ENCODE measurements at regions of chr3 and their contacts with region 1.

Region 1: DNA sequence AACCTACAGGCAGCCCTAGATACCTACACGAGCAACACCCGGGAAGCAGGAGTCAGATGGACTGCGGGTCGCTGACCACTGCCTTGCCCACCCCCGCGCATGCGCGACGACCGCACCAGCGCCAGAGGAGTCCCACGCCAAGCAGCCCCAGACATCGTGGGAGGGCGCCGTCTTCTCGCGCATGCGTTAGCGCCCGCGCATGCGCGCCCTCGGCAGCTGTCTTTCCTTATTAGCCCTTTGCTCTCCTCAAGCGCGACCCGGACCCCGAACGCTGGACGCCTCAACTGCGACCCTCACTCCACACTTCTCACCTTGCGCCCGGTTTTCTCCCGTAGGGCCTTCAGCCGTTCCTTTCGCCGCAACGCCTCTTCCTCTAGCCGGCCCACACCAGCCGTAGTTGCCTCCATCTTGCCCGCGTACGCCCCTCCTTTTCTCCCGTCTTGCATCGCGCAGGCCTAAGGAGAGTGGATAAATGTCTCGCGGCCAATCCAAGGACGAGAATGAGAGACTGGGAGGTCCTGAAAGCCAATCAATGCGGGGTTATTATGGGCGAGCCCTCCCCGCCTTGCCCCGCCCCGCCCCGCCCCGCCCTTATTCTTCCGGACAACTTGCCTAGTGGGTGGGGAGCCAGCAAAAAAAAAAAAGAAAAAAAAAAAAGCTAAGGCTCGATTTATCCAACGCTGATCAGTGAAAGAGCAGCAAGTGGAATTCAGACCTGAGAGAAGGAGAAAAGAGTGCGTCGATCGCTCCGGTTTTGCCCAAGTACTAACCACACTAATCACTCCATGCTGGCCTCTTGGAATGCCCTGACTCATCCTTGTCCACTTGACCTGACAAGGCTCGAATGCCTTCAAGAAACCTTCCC is at the start of gene CCDC12:
- DNase-seq: peak; percentile 98
- ATAC-seq: peak; percentile 79
- H3K4me3 ChIP-seq: peak within 1 kb of the TSS; percentile 87
- H3K27ac ChIP-seq: peak within 1 kb of the TSS; percentile 87
- H3K4me1 ChIP-seq: peaks cover 29% of the 10 kb centered on the region
- H3K27me3 ChIP-seq: no peaks in the 10 kb centered on the region
- CTCF ChIP-seq: no peak
- total RNA-seq, gene CCDC12: 44.2 and 67.8 TPM in 2 replicates

Region 2: DNA sequence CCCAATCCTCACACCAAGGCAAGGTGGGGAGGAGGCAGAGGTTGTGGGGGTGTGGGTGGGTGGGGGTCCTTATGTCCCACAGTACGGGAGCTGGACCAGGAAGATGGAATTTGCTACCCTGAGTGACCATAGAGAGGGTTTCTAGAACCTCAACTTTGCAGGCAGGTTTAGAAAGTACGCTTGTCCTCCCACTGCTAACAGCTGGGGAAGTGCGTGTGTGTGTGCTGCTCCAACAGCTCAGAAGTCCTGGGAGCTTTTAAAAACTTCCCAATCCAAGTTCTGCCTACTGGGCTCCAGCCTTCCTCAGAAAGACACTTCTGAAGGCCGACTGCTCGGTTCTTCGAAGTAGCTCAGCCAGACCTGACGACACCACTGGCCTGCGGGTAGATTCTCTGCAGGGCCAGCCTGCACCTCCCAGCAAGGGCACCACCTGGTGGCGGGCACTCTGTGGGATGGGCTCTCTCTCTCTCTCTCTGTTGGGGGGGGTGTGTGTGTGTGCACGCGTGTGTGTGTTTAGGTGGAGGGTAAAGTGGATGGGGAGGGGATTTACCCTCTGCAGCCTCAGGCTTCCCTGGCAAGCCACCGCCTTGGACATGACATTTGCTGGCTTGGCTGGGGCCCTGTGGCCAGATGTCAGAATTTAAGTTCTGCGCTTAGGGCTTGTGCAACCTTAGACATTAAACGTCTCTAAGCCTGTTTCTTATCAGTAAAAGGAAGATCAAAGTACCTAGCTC is 1766.1 kb before region 1 on chr3:
- CTCF ChIA-PET with region 1: no interaction called
- POLR2A ChIA-PET with region 1: interaction called, 11 read pairs
- intact Hi-C with region 1: no loop called
- DNase-seq: peak; percentile 92
- ATAC-seq: peak; percentile 98
- H3K4me3 ChIP-seq: no peak overlapping the region
- H3K27ac ChIP-seq: no peak overlapping the region
- H3K4me1 ChIP-seq: peaks cover 13% of the 10 kb centered on the region
- H3K27me3 ChIP-seq: no peaks in the 10 kb centered on the region
- CTCF ChIP-seq: peak; percentile 92

Region 3: GRCh38 chr3:46935168-46935858 is 41.2 kb before region 1 on chr3:
- CTCF ChIA-PET with region 1: interaction called, 7 read pairs
- POLR2A ChIA-PET with region 1: interaction called, 33 read pairs
- intact Hi-C with region 1: loop called (anchors 2 kb)
- DNase-seq: peak; percentile 93
- ATAC-seq: peak; percentile 84
- H3K4me3 ChIP-seq: 0 out of 2 replicates have a peak overlapping the region, but pooled peaks have one; percentile 32
- H3K27ac ChIP-seq: peak overlapping the region; percentile 96
- H3K4me1 ChIP-seq: peaks cover 65% of the 10 kb centered on the region
- H3K27me3 ChIP-seq: no peaks in the 10 kb centered on the region
- CTCF ChIP-seq: peak; percentile 56

Region 4: DNA sequence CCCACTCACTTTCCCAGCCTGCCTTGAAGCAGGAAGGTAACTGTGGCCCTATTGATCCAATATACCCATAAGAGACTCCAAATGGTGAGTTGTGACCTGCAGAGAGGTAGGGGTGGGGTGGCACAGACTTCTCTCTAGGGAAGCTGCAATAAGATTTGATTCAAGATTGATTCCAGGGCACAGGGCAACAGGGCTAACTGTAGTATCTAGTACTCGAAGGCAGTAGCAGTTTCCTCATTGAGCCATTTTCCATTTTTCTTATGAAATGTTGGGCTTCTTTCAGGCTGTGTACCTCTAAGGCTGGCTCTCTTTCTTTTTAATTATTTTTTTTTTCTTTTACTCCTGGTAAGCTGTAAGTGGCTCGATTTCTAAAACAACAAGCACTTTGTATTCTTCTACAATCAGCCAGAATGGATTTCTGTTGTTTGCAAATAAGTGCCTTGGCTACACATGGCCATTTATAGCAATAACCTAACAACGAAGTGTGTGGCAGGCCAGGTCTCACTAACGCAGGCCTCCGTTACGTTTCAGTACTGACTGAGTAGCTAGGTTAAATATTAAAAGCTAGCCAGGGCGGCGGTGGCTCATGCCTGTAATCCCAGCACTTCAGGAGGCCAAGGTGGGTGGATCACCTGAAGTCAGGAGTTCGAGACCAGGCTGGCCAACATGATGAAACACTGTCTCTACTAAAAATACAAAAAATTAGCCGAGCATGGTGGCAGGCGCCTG is 19.3 kb before region 1 on chr3:
- CTCF ChIA-PET with region 1: no interaction called
- POLR2A ChIA-PET with region 1: interaction called, 14 read pairs
- intact Hi-C with region 1: no loop called
- DNase-seq: no peak
- ATAC-seq: no peak
- H3K4me3 ChIP-seq: no peak overlapping the region
- H3K27ac ChIP-seq: no peak overlapping the region
- H3K4me1 ChIP-seq: peaks cover 32% of the 10 kb centered on the region
- H3K27me3 ChIP-seq: no peaks in the 10 kb centered on the region
- CTCF ChIP-seq: no peak

Measured in PC-3 (cell line).